ENCODE measurements at regions of chr22 and their contacts with region 1.

Region 1: GRCh38 chr22:46116491-46116958 is 33.8 kb upstream of the PPARA start:
- DNase-seq: peak; percentile 72 to 91
- H3K4me3 ChIP-seq: no peak overlapping the region
- H3K27ac ChIP-seq: no peak overlapping the region
- H3K4me1 ChIP-seq: no peaks in the 10 kb centered on the region
- H3K27me3 ChIP-seq: no peaks in the 10 kb centered on the region
- CTCF ChIP-seq: peak; percentile 96

Region 2: GRCh38 chr22:45577746-45578523 is 538.6 kb before region 1 on chr22:
- CTCF ChIA-PET with region 1: interaction called, 3 read pairs
- POLR2A ChIA-PET with region 1: no interaction called
- intact Hi-C with region 1: loop called (anchors 10 kb)
- DNase-seq: peak; percentile 63 to 79
- H3K4me3 ChIP-seq: no peak overlapping the region
- H3K27ac ChIP-seq: no peak overlapping the region
- H3K4me1 ChIP-seq: peaks cover under 1% of the 10 kb centered on the region; the same call in 1 of the 2 replicates
- H3K27me3 ChIP-seq: no peaks in the 10 kb centered on the region
- CTCF ChIP-seq: peak; percentile 99

Region 3: DNA sequence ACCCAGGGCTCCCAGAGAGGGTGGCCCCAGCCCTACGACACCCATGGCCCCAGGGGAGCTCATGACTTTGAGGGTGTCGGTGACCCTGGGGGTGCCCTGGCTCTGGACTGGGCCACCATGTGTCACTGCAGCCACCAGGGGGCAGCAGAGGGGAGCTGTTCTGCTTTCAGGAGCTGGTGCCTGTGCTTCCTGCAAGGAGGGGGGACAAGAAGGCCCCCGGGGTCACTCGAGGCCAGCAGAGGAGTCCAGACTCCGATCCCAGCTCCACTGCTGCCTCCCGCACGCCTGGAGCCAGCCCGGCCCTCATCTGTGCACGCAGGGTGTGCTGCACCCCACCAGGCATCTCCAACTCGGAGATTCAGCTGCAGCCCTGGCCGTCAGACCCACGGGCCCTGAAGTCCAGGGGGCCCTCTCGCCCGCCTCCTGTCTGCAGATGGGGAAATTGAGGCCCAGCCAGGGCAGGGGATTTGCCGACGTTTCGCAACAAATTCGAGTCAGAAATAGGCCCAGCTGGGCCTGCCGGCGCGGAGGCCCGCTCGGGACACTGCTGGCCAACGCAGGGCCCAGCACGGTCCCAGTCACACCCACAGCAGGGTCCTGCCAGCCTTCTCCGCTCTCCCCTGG is 110.0 kb before region 1 on chr22:
- CTCF ChIA-PET with region 1: interaction called, 10 read pairs
- POLR2A ChIA-PET with region 1: no interaction called
- intact Hi-C with region 1: loop called (anchors 1 kb)
- DNase-seq: peak; percentile 77 to 90
- H3K4me3 ChIP-seq: peak overlapping the region; percentile 61
- H3K27ac ChIP-seq: peak overlapping the region; percentile 73
- H3K4me1 ChIP-seq: peaks cover 26% of the 10 kb centered on the region
- H3K27me3 ChIP-seq: no peaks in the 10 kb centered on the region
- CTCF ChIP-seq: peak; percentile 98

Region 4: GRCh38 chr22:46035742-46036557 is 80.6 kb before region 1 on chr22:
- CTCF ChIA-PET with region 1: no interaction called
- POLR2A ChIA-PET with region 1: no interaction called
- intact Hi-C with region 1: no loop called
- DNase-seq: peak; percentile 96 to 99
- H3K4me3 ChIP-seq: peak overlapping the region; percentile 99
- H3K27ac ChIP-seq: peak overlapping the region; percentile 34; the same call in 1 of the 2 replicates
- H3K4me1 ChIP-seq: peaks cover 15% of the 10 kb centered on the region
- H3K27me3 ChIP-seq: no peaks in the 10 kb centered on the region
- CTCF ChIP-seq: no peak

Region 5: DNA sequence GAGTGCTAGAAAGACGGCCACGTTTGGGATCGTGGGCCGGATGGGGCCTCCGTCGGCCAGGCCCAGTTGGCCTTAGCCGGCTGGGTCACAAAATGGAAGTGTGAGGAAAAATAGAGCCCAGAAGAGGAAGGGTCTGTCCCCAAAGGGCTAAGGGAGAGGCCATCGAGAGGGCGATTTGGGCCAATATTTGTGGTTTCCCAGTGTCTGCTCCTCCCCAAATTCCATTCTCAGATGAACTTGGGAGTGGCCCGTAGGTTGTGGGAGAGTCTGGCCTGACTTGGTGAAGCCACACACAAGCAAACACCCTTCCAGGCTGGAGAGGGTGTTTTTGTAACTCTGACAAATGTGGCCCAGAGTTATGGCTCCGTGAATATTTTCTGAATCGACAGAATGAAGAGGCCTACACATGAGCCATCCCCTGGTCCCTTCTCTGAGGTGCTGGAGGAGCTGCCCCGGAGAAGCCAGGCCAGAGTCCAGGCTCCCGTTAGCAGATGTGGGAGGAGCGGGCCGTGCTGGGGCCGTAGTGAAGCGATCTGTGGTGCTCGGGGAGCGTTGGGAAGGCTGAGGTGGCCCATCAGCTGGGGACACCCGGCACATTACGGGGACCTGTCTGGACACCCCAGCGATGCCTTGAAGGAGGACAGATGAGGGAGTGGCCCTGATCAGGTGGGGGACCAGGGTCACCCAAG is 39.7 kb before region 1 on chr22:
- CTCF ChIA-PET with region 1: interaction called, 7 read pairs
- POLR2A ChIA-PET with region 1: no interaction called
- intact Hi-C with region 1: loop called (anchors 2 kb)
- DNase-seq: peak; percentile 56 to 63
- H3K4me3 ChIP-seq: peak overlapping the region; percentile 21; the same call in 1 of the 2 replicates
- H3K27ac ChIP-seq: peak overlapping the region; percentile 45
- H3K4me1 ChIP-seq: peaks cover 38% of the 10 kb centered on the region
- H3K27me3 ChIP-seq: no peaks in the 10 kb centered on the region
- CTCF ChIP-seq: no peak

Region 6: GRCh38 chr22:46131151-46131587 is 14.6 kb after region 1 on chr22:
- CTCF ChIA-PET with region 1: interaction called, 25 read pairs
- POLR2A ChIA-PET with region 1: no interaction called
- intact Hi-C with region 1: no loop called
- DNase-seq: no peak
- H3K4me3 ChIP-seq: no peak overlapping the region
- H3K27ac ChIP-seq: no peak overlapping the region
- H3K4me1 ChIP-seq: no peaks in the 10 kb centered on the region
- H3K27me3 ChIP-seq: no peaks in the 10 kb centered on the region
- CTCF ChIP-seq: peak; percentile 69